Brain microvascular endothelial cell (primary cell): ENCODE measurements at regions of chr1 and their contacts with region 1.

Region 1: GRCh38 chr1:169348383-169349036 is 19.1 kb downstream of the NME7 start:
- DNase-seq: peak; percentile 43
- H3K4me3 ChIP-seq: no peak overlapping the region
- H3K27ac ChIP-seq: no peak overlapping the region
- H3K27me3 ChIP-seq: no peaks in the 10 kb centered on the region
- CTCF ChIP-seq: peak; percentile 56

Region 2: DNA sequence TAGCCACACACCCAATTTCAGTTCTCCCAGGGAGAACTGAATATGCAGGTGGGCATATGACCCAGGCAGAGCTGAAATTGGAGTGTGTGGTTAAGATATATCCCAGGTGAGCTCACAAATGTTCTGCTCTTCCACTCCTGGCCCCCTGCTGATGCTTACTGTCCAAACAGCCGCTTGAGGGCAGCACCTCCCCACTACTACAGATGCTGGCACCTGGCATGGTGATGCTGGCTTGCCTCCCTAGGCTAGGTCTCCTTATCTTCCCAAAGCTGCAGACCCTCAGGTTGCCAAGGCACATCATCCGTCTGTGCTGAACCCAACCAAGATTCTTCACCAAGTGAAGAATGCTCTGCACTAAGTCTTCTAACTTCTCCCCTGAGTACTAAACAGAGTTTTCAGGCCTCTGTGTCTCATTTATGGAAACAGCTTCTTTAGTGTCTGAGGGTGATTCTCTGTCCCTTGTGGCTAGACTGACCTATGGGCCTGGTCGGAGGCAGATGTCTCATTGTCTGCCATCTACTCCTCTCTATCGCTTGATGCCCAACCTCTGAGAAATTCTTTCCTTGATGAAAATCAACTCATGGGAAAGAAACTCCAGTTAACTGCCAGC is 744.9 kb before region 1 on chr1:
- in situ Hi-C with region 1: loop called (anchors 25 kb)
- DNase-seq: peak; percentile 55
- H3K4me3 ChIP-seq: no peak overlapping the region
- H3K27ac ChIP-seq: no peak overlapping the region
- H3K27me3 ChIP-seq: no peaks in the 10 kb centered on the region
- CTCF ChIP-seq: peak; percentile 90

Region 3: GRCh38 chr1:169466259-169467230 is 118.0 kb after region 1 on chr1:
- in situ Hi-C with region 1: no loop called
- DNase-seq: peak; percentile 46
- H3K4me3 ChIP-seq: no peak overlapping the region
- H3K27ac ChIP-seq: no peak overlapping the region
- H3K27me3 ChIP-seq: no peaks in the 10 kb centered on the region
- CTCF ChIP-seq: peak; percentile 53